Cardiac septum (tissue), 1 donor: ENCODE measurements at regions of chr9 and their contacts with region 1.

Region 1: DNA sequence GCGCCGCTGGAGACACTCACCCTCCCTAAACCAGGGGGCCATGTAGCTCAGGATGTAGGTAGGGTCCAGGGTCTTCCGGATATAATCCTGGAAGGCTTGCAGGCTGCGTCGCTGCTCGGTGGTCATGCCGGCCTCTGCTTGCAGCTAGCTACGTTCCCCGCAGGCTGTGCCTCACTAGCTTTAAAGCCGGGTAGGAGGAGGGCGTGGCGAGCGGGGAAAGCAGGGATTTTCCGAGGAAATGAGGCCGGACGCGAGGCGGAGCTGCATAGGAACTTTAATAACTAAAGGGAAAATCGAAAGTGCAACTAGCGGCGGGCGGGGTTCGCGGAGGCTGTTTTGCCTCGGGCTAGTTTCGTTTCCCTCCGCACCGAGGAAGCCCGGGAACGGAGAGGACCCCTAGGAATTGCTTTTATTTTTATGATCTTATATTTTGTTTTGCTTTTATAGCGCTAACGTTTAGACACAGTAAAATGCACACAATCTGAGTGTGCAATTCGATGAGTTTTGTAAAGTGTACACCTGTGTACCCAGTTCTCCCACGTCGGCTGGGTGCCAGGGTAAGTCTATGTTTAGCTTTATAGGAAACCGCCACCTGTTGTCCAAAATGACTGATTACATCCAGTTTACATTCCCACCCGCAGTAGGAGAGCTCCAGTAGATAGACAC is at the start of gene RIGI:
- DNase-seq: peak; percentile 97
- total RNA-seq, gene RIGI: 2.8 TPM

Region 2: GRCh38 chr9:32550562-32551433 is 24.6 kb after region 1 on chr9:
- intact Hi-C with region 1: loop called (anchors 2 kb)
- DNase-seq: peak; percentile 98